ENCODE measurements at regions of chr20 and their contacts with region 1.

Region 1: GRCh38 chr20:34747479-34747878 is 43.3 kb downstream of the TP53INP2 start:
- DNase-seq: no peak
- H3K4me3 ChIP-seq: no peak overlapping the region
- H3K4me3 Mint-ChIP-seq: no peak overlapping the region
- H3K27ac Mint-ChIP-seq: no peak overlapping the region
- H3K4me1 ChIP-seq: no peaks in the 10 kb centered on the region
- H3K4me1 Mint-ChIP-seq: no peaks in the 10 kb centered on the region
- H3K27me3 ChIP-seq: no peaks in the 10 kb centered on the region
- H3K27me3 Mint-ChIP-seq: no peaks in the 10 kb centered on the region
- CTCF ChIP-seq: no peak

Region 2: DNA sequence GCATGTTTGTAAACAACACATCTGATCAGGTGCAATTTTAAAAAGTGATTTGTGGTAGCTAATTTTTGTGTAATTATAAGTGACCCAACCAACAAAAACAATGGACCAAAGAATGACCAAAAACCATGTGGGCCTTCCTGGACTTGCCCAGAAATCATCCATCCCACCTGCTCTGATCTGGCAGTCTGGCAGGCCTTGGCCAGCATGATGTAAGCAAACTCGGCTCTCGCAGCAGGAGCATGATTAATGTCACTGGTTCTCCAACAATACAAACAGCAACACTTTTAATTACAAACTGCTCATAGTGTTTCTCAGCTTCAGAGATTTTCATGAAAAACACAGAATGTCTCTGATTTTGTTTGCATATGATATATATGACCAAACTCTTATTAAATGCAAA is 27.2 kb before region 1 on chr20:
- CTCF ChIA-PET with region 1: no interaction called
- POLR2A ChIA-PET with region 1: interaction called, 19 read pairs
- intact Hi-C with region 1: no loop called
- DNase-seq: no peak
- H3K4me3 ChIP-seq: no peak overlapping the region
- H3K4me3 Mint-ChIP-seq: no peak overlapping the region
- H3K27ac Mint-ChIP-seq: no peak overlapping the region
- H3K4me1 ChIP-seq: peaks cover 19% of the 10 kb centered on the region; the same call in 1 of the 2 replicates
- H3K4me1 Mint-ChIP-seq: peaks cover 9% of the 10 kb centered on the region
- H3K27me3 ChIP-seq: no peaks in the 10 kb centered on the region
- H3K27me3 Mint-ChIP-seq: no peaks in the 10 kb centered on the region
- CTCF ChIP-seq: no peak

Measured in Caco-2 (cell line).